ENCODE measurements at regions of chr4 and their contacts with region 1.

Region 1: GRCh38 chr4:41957634-41958033 is 22.4 kb downstream of the TMEM33 start:
- DNase-seq: no peak
- ATAC-seq: no peak
- H3K4me3 Mint-ChIP-seq: no peak overlapping the region
- H3K27ac Mint-ChIP-seq: no peak overlapping the region
- H3K4me1 Mint-ChIP-seq: no peaks in the 10 kb centered on the region
- H3K27me3 Mint-ChIP-seq: no peaks in the 10 kb centered on the region

Region 2: DNA sequence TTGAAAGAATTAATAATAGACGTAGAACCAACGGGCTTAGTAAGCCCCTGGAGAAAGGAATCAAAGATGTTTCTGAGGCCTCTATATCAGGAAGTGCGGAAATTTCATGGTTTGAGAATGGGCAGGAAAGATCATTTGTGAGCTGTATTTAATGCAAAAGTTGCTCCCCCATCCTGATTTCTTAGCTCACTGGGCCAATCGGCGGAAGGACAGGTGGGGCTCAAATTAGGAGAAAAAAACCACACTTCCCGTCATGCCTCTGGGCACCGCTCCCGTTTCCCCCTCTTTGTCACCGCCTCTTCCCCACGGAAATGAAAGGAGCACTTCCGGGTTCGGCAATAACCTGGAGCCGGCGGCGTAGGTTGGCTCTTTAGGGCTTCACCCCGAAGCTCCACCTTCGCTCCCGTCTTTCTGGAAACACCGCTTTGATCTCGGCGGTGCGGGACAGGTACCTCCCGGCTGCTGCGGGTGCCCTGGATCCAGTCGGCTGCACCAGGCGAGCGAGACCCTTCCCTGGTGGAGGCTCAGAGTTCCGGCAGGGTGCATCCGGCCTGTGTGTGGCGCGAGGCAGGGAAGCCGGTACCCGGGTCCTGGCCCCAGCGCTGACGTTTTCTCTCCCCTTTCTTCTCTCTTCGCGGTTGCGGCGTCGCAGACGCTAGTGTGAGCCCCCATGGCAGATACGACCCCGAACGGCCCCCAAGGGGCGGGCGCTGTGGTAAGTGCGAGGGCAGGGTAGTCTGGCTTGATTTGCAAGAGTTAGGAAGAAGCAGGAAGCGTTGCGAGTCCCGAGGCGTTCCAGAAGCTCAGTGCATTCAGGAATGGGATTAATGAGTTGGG is 22.6 kb before region 1 on chr4 and contains the start of gene TMEM33:
- CTCF ChIA-PET with region 1: no interaction called
- POLR2A ChIA-PET with region 1: no interaction called
- intact Hi-C with region 1: loop called in 1 of 2 experiments (anchors 1 kb)
- DNase-seq: peak; percentile 85
- ATAC-seq: peak; percentile 86
- H3K4me3 Mint-ChIP-seq: peak within 1 kb of the TSS; percentile 97
- H3K27ac Mint-ChIP-seq: peak within 1 kb of the TSS; percentile 92
- H3K4me1 Mint-ChIP-seq: peaks cover 36% of the 10 kb centered on the region
- H3K27me3 Mint-ChIP-seq: no peaks in the 10 kb centered on the region
- total RNA-seq, gene TMEM33: 43.8 to 57.2 TPM

Region 3: GRCh38 chr4:42008011-42008786 is 50.6 kb after region 1 on chr4:
- CTCF ChIA-PET with region 1: no interaction called
- POLR2A ChIA-PET with region 1: no interaction called
- intact Hi-C with region 1: no loop called
- DNase-seq: no peak
- ATAC-seq: no peak
- H3K4me3 Mint-ChIP-seq: no peak overlapping the region
- H3K27ac Mint-ChIP-seq: no peak overlapping the region
- H3K4me1 Mint-ChIP-seq: peaks cover 29% of the 10 kb centered on the region
- H3K27me3 Mint-ChIP-seq: no peaks in the 10 kb centered on the region

Region 4: DNA sequence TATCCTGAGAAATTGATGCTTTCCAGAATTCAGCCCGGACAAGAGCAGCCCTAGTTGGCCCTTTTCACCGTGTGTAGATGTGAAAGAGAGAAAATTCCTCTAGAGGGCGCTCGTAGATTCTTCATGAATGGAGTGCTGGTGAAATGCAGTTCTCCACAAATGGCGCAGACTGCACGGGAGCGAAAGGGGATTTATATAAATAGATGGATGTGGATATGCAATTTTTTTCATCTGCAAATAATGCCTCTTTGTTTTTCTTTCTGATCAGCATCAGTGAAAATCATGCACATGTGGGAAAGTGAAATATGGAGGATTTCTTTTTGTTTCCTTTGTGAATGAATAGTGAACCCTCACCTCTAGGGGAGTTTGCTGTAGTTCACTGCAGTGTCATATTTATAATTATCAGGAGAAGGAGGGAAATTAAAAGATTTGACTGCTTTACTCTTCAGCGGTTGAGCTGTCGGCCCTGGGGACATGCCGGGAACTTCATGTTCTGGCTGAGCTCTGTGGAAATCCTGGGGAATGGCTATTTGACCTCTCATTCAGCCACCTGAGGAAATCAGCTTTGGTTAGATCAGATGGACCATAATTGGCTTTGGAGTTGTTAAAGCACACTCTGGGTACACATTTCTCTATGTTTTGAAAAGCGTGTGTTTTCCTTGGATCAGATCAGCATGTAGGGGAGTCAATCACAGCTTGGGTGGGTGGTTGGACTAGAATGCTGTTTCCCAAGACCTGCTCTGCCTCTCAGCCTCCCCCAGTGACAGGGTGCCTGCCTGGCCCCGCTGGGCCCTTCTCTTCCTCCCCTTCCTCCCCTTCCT is 324.7 kb after region 1 on chr4:
- CTCF ChIA-PET with region 1: no interaction called
- POLR2A ChIA-PET with region 1: no interaction called
- intact Hi-C with region 1: loop called in 1 of 2 experiments (anchors 2 kb)
- DNase-seq: peak; percentile 43
- ATAC-seq: peak; percentile 74
- H3K4me3 Mint-ChIP-seq: no peak overlapping the region
- H3K27ac Mint-ChIP-seq: no peak overlapping the region
- H3K4me1 Mint-ChIP-seq: peaks cover 5% of the 10 kb centered on the region
- H3K27me3 Mint-ChIP-seq: peaks cover 14% of the 10 kb centered on the region

Measured in activated CD4-positive, alpha-beta T cell treated with anti-CD3 and anti-CD28 coated beads for 36 hours (primary cell).